Naive thymus-derived CD4-positive, alpha-beta T cell (primary cell): ENCODE measurements at regions of chr1 and their contacts with region 1.

Region 1: GRCh38 chr1:205919026-205919746 is 24.1 kb downstream of the SLC26A9 start:
- DNase-seq: peak; percentile 11 to 66 (median 47)
- ATAC-seq: peak; percentile 80
- H3K4me3 ChIP-seq: no peak overlapping the region
- H3K4me3 Mint-ChIP-seq: no peak overlapping the region
- H3K27ac ChIP-seq: no peak overlapping the region
- H3K27ac Mint-ChIP-seq: no peak overlapping the region
- H3K4me1 ChIP-seq: no peaks in the 10 kb centered on the region
- H3K4me1 Mint-ChIP-seq: no peaks in the 10 kb centered on the region
- H3K27me3 ChIP-seq: no peaks in the 10 kb centered on the region
- H3K27me3 Mint-ChIP-seq: peaks cover 0 to 3% (median 0%) of the 10 kb centered on the region in 5 donors

Region 2: DNA sequence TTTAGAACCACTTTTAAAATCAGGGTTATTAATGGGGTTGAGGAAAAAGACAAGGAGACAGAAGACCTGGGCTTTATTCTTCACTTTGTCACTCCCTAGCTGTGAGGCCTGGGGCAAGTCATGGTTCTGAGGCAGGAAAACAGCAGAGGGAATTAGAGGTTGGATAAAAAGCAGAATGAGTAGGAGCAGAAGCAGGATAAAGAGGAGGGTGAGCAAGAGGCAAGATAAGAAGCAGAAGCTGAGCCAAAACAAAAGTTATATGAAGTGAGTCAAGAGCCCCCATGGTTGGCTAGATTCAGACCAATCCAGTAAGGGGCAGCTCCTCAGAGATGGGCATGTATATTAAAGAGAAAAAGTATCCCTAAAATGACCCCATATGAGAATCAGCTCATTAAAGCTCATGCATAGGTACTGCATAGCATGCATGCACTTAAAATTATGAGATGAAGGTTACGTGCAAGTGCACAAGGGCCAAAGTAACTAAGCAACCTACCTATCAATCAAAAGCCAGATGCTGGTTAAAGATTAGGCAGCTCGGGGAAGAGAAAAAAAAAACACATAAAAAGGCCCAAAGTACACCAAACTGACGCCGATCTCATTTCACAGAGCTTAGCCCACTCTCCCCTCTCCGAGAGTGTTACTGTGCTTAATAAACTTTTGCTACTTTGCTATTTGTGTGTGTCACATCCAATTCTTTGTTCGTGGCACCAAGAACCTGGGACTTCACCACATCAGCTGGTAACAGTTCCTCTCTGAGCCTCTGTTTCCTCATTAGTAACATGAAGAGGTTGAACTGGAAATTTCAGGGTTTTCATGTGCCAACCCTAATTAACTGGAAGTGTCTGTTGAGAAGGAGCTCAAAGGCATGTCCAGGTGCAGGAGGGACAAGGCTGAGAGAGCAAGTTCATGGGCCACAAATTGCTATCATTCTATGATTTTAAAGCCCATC is 195.8 kb after region 1 on chr1:
- CTCF ChIA-PET with region 1: no interaction called
- POLR2A ChIA-PET with region 1: no interaction called
- intact Hi-C with region 1: loop called in 1 of 2 experiments (anchors 2 kb)
- DNase-seq: no peak
- ATAC-seq: no peak
- H3K4me3 ChIP-seq: no peak overlapping the region
- H3K4me3 Mint-ChIP-seq: peak overlapping the region in 1 of 10 donors; percentile 83
- H3K27ac ChIP-seq: no peak overlapping the region
- H3K27ac Mint-ChIP-seq: no peak overlapping the region
- H3K4me1 ChIP-seq: no peaks in the 10 kb centered on the region
- H3K4me1 Mint-ChIP-seq: peaks cover 7 to 11% (median 9%) of the 10 kb centered on the region in 7 donors
- H3K27me3 ChIP-seq: no peaks in the 10 kb centered on the region
- H3K27me3 Mint-ChIP-seq: peaks cover 25 to 67% (median 33%) of the 10 kb centered on the region in 5 donors